PC-3 (cell line): ENCODE measurements at regions of chr19 and their contacts with region 1.

Region 1: DNA sequence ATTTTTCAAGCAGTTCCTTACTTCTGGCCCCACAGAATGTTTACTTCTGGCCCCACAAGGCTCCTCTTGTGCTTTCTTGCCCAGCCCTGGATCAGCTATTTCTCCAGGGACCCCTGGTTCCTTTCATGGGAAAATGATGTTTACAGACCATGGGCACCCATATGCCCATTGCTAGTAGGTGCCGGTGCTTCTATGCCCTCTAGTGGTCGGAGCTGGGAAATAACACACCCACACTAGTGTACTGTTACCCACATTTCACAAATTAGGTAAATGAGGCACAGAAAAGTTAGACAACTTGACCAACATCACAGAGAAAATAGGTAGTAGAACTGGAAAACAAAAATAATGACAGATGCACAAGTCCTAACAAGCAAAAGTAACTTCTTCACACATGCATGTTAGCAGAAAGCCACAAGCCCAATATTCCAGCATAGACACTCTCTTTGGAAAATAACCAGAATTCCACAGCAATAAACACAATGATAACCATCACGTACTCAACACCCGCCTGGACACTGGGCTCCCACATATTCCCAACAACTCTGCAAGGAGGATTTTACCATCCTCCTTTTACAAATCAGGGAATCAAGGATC is 1.3 kb upstream of the CEACAM6 start:
- DNase-seq: peak; percentile 69
- ATAC-seq: peak; percentile 61
- H3K4me3 ChIP-seq: no peak overlapping the region
- H3K27ac ChIP-seq: peak overlapping the region; percentile 63
- H3K4me1 ChIP-seq: peaks cover 38% of the 10 kb centered on the region
- H3K27me3 ChIP-seq: no peaks in the 10 kb centered on the region
- CTCF ChIP-seq: peak; percentile 71

Region 2: GRCh38 chr19:41775360-41775695 is 21.3 kb after region 1 on chr19:
- CTCF ChIA-PET with region 1: interaction called, 26 read pairs
- POLR2A ChIA-PET with region 1: no interaction called
- intact Hi-C with region 1: loop called (anchors 2 kb)
- DNase-seq: peak; percentile 87
- ATAC-seq: peak; percentile 53
- H3K4me3 ChIP-seq: peak overlapping the region; percentile 26; the same call in 1 of the 2 replicates
- H3K27ac ChIP-seq: peak overlapping the region; percentile 99
- H3K4me1 ChIP-seq: peaks cover 70% of the 10 kb centered on the region
- H3K27me3 ChIP-seq: no peaks in the 10 kb centered on the region
- CTCF ChIP-seq: no peak

Region 3: DNA sequence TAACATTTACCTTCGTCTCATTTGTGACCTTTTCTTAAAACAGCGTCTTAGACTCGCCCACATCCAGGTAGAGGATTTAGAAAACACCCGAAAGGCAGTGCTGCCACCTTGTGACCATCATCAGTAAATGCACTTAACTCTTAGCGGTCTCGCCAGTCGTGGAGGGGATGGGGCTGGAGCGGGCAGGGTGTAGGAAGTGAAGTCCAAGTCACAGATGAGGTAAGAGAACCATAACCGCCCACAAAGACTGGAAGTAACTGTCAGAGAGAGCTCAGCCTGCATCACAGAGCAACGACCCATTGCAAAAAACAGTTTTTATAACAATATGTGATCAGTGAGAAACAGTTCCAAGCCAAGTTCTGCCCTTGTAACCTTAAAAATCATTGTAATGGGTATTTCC is 31.6 kb after region 1 on chr19:
- CTCF ChIA-PET with region 1: interaction called, 7 read pairs
- POLR2A ChIA-PET with region 1: no interaction called
- intact Hi-C with region 1: loop called (anchors 1 kb)
- DNase-seq: peak; percentile 83
- ATAC-seq: peak; percentile 85
- H3K4me3 ChIP-seq: no peak overlapping the region
- H3K27ac ChIP-seq: peak overlapping the region; percentile 54
- H3K4me1 ChIP-seq: peaks cover 15% of the 10 kb centered on the region
- H3K27me3 ChIP-seq: no peaks in the 10 kb centered on the region
- CTCF ChIP-seq: peak; percentile 76

Region 4: DNA sequence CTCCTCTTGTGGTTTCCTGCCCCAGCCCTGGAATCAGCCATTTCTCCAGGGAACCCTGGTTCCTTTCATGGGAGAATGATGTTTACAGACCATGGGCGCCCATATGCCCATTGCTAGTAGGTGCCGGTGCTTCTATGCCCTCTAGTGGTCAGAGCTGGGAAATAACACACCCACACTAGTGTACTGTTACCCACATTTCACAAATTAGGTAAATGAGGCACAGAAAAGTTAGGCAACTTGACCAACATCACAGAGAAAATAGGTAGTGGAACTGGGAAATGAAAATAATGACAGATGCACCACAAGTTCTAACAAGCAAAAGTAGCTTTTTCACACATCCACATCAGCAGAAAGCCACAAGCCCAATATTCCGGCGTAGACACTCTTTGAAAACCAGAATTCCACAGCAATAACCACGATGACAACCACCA is 41.0 kb after region 1 on chr19:
- CTCF ChIA-PET with region 1: interaction called, 12 read pairs
- POLR2A ChIA-PET with region 1: no interaction called
- intact Hi-C with region 1: no loop called
- DNase-seq: peak; percentile 70
- ATAC-seq: no peak
- H3K4me3 ChIP-seq: no peak overlapping the region
- H3K27ac ChIP-seq: peak overlapping the region; percentile 100
- H3K4me1 ChIP-seq: peaks cover 60% of the 10 kb centered on the region
- H3K27me3 ChIP-seq: no peaks in the 10 kb centered on the region
- CTCF ChIP-seq: peak; percentile 74

Region 5: GRCh38 chr19:41821003-41821735 is 67.1 kb after region 1 on chr19:
- CTCF ChIA-PET with region 1: interaction called, 6 read pairs
- POLR2A ChIA-PET with region 1: no interaction called
- intact Hi-C with region 1: loop called (anchors 2 kb)
- DNase-seq: peak; percentile 72
- ATAC-seq: peak; percentile 87
- H3K4me3 ChIP-seq: peak overlapping the region; percentile 33; the same call in 1 of the 2 replicates
- H3K27ac ChIP-seq: no peak overlapping the region
- H3K4me1 ChIP-seq: no peaks in the 10 kb centered on the region
- H3K27me3 ChIP-seq: no peaks in the 10 kb centered on the region
- CTCF ChIP-seq: peak; percentile 83

Region 6: GRCh38 chr19:43639519-43640423 is 1885.7 kb after region 1 on chr19 and contains the start of gene CADM4:
- CTCF ChIA-PET with region 1: no interaction called
- POLR2A ChIA-PET with region 1: no interaction called
- intact Hi-C with region 1: no loop called
- DNase-seq: no peak
- ATAC-seq: peak; percentile 78
- H3K4me3 ChIP-seq: peak within 1 kb of the TSS; percentile 61
- H3K27ac ChIP-seq: no peak within 1 kb of the TSS
- H3K4me1 ChIP-seq: no peaks in the 10 kb centered on the region; the same call in 1 of the 2 replicates
- H3K27me3 ChIP-seq: no peaks in the 10 kb centered on the region
- CTCF ChIP-seq: no peak
- total RNA-seq, gene CADM4: 13.7 and 15.0 TPM in 2 replicates